Activated CD8-positive, alpha-beta T cell treated with anti-CD3 and anti-CD28 coated beads, Interleukin-2, amount 10 ng/mL, durations not matched to agents 7 days and 5 days (primary cell): ENCODE measurements at regions of chr14 and their contacts with region 1.

Region 1: GRCh38 chr14:24123508-24124417 is 6.7 kb upstream of the FITM1 start:
- DNase-seq: no peak
- ATAC-seq: no peak
- H3K4me3 Mint-ChIP-seq: no peak overlapping the region
- H3K27ac Mint-ChIP-seq: peak overlapping the region; percentile 3
- H3K4me1 Mint-ChIP-seq: peaks cover 5% of the 10 kb centered on the region
- H3K27me3 Mint-ChIP-seq: no peaks in the 10 kb centered on the region

Region 2: DNA sequence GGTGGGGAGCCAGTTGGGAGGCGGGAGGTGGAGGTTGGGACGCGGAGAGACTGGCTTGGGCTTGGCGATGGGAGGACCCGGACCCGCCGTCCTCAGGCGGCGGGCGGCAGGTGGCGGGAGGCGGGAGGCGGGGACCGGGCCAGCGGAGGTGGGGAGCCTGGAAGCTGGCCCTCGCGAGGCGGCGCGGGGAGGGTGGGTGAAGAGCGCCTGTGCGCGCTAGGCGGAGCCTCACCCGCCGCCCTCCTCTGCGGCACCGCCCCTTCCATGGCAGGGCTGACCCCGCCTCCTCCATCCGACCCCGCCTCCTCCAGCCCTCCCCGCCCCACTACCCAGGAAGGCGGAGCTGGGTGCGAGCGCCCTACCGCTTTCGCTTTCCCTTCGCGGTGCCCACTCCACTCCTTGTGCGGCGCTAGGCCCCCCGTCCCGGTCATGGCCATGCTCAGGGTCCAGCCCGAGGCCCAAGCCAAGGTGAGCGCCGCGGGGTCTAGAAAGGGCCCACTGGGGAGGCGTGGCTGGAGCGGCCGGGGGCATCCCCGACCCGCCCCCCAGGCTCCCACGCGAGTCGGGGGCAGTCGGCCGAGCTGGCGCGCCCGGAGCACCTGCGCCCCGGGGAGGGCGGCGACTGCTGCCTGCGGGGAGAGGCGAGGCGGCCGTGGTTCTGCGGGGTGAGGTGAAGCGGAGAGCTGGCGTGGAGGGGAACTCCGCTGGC is 12.2 kb after region 1 on chr14 and contains the start of gene PSME1:
- CTCF ChIA-PET with region 1: interaction called, 3 read pairs
- POLR2A ChIA-PET with region 1: interaction called, 119 read pairs
- DNase-seq: peak; percentile 95
- ATAC-seq: peak; percentile 91
- H3K4me3 Mint-ChIP-seq: peak within 1 kb of the TSS; percentile 86
- H3K27ac Mint-ChIP-seq: peak within 1 kb of the TSS; percentile 91
- H3K4me1 Mint-ChIP-seq: peaks cover 55% of the 10 kb centered on the region
- H3K27me3 Mint-ChIP-seq: no peaks in the 10 kb centered on the region
- total RNA-seq, gene PSME1: 516 to 530 TPM